T-cell (primary cell): ENCODE measurements at regions of chr6 and their contacts with region 1.

Region 1: GRCh38 chr6:36056178-36056577 is 28.6 kb downstream of the MAPK14 start:
- DNase-seq: no peak
- ATAC-seq: no peak
- H3K4me3 ChIP-seq: no peak overlapping the region
- H3K4me3 Mint-ChIP-seq: no peak overlapping the region
- H3K27ac ChIP-seq: no peak overlapping the region
- H3K27ac Mint-ChIP-seq: no peak overlapping the region
- H3K4me1 ChIP-seq: peaks cover 0 to 5% of the 10 kb centered on the region in 2 experiments
- H3K4me1 Mint-ChIP-seq: peaks cover 23 to 32% (median 24%) of the 10 kb centered on the region in 3 donors
- H3K27me3 ChIP-seq: no peaks in the 10 kb centered on the region
- H3K27me3 Mint-ChIP-seq: no peaks in the 10 kb centered on the region

Region 2: DNA sequence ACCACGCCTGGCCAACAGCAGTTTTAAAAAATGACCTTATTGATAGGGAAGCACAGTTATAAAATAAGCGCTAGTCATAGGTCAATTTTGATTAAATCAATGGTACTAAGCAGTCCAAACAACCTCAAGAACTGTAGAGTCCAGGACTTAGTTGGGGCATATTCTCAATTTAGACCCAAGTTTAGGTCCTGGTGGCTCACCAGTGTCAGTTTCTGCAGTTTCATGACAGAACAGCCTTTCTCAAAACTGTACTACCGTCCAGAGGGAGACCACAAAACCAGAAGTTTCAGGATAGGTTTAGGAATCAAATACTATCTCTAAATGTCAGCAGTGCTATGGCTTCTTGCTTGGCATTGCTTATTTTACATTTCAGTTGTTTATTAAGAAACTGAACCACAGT is 211.9 kb before region 1 on chr6:
- CTCF ChIA-PET with region 1: no interaction called
- POLR2A ChIA-PET with region 1: interaction called in 1 of 2 experiments, 11 read pairs
- DNase-seq: no peak
- ATAC-seq: no peak
- H3K4me3 ChIP-seq: no peak overlapping the region
- H3K4me3 Mint-ChIP-seq: no peak overlapping the region
- H3K27ac ChIP-seq: no peak overlapping the region
- H3K27ac Mint-ChIP-seq: no peak overlapping the region
- H3K4me1 ChIP-seq: no peaks in the 10 kb centered on the region
- H3K4me1 Mint-ChIP-seq: no peaks in the 10 kb centered on the region
- H3K27me3 ChIP-seq: no peaks in the 10 kb centered on the region
- H3K27me3 Mint-ChIP-seq: no peaks in the 10 kb centered on the region

Region 3: DNA sequence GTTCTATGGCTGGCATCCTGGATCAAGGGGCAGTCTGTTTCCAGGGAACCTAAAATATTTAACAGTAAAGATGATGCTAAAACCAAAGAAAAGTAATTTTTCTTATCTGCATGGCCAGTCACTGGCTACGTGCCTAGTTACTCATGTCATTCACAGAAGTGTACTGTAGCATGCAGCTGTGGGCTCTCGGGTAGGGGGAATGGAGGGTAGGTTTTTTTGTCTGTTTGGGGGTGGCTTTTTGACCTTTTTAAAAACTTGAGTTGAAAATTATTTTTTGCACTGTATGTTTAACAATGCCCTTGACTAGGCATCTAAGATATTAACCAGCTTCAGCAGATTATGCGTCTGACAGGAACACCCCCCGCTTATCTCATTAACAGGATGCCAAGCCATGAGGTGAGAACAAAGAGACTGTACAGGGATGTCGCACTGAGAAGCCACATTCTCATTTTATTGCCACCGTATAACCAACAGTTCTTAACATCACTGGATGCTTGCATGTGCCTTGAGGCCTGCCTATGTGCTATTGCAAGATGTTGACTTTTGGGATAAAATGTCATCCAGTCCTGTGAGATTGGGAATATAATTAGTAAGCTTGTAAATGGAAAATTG is 43.8 kb after region 1 on chr6:
- CTCF ChIA-PET with region 1: no interaction called
- POLR2A ChIA-PET with region 1: no interaction called
- DNase-seq: peak in 31 of 35 experiments; percentile 26 to 83 (median 57)
- ATAC-seq: peak; percentile 80 to 92 (median 90)
- H3K4me3 ChIP-seq: peak overlapping the region in 1 of 2 donors; percentile 23
- H3K4me3 Mint-ChIP-seq: peak overlapping the region in 2 of 3 donors; percentile 39 to 62
- H3K27ac ChIP-seq: peak overlapping the region; percentile 61
- H3K27ac Mint-ChIP-seq: peak overlapping the region; percentile 75 to 93
- H3K4me1 ChIP-seq: peaks cover 32 to 44% of the 10 kb centered on the region in 2 experiments
- H3K4me1 Mint-ChIP-seq: peaks cover 42 to 56% (median 50%) of the 10 kb centered on the region in 3 donors
- H3K27me3 ChIP-seq: no peaks in the 10 kb centered on the region
- H3K27me3 Mint-ChIP-seq: no peaks in the 10 kb centered on the region